SK-N-SH (cell line): ENCODE measurements at regions of chr2 and their contacts with region 1.

Region 1: GRCh38 chr2:74529357-74530238 is at the starts of genes AUP1 and HTRA2:
- DNase-seq: peak; percentile 98
- H3K4me3 ChIP-seq: peak within 1 kb of the TSS; percentile 83 to 99
- H3K27ac ChIP-seq: peak within 1 kb of the TSS; percentile 68 to 92
- H3K4me1 ChIP-seq: peaks cover 13 to 24% of the 10 kb centered on the region in 2 experiments
- H3K27me3 ChIP-seq: no peaks in the 10 kb centered on the region
- CTCF ChIP-seq: no peak
- EP300 ChIP-seq: no peak
- RAD21 ChIP-seq: 0 out of 2 replicates have a peak, but pooled peaks have one; percentile 4
- polyA plus RNA-seq, gene AUP1: 118 and 151 TPM in 2 replicates
- polyA plus RNA-seq, gene HTRA2: 55.7 and 60.4 TPM in 2 replicates

Region 2: GRCh38 chr2:73987109-73987947 is 542.3 kb before region 1 on chr2:
- CTCF ChIA-PET with region 1: no interaction called
- POLR2A ChIA-PET with region 1: no interaction called
- DNase-seq: peak; percentile 62
- H3K4me3 ChIP-seq: peak overlapping the region; percentile 41 to 42
- H3K27ac ChIP-seq: 0 out of 4 replicates have a peak overlapping the region, but pooled peaks of 1 of the 2 experiments have one; percentile 34
- H3K4me1 ChIP-seq: peaks cover 6 to 46% of the 10 kb centered on the region in 2 experiments; a peak in 3 of 4 replicates
- H3K27me3 ChIP-seq: no peaks in the 10 kb centered on the region
- CTCF ChIP-seq: peak; percentile 45
- EP300 ChIP-seq: no peak
- RAD21 ChIP-seq: peak; percentile 59

Region 3: DNA sequence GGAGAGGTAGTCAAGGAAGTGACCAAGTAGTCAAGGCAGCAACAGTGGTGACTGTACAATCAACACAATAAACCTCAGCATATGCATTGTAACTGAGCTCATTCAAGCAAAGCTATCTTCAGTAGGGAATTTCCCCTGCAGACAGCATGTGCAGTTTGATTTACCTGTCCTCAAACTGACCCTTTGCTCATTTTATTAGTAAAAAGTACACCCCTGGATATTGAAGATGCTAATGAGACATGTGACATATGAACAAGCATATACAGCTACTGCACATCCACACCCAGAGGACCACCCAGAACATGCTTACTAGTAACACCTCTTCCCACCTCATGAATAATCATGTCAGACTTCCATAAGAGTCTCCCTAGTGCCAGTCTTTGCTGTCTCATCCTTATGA is 123.6 kb before region 1 on chr2:
- CTCF ChIA-PET with region 1: no interaction called
- POLR2A ChIA-PET with region 1: no interaction called
- DNase-seq: no peak
- H3K4me3 ChIP-seq: no peak overlapping the region
- H3K27ac ChIP-seq: peak overlapping the region in 1 of 2 experiments; percentile 12; a peak in 1 of 4 replicates
- H3K4me1 ChIP-seq: peaks cover 2 to 9% of the 10 kb centered on the region in 2 experiments; a peak in 2 of 4 replicates
- H3K27me3 ChIP-seq: no peaks in the 10 kb centered on the region
- CTCF ChIP-seq: no peak
- EP300 ChIP-seq: no peak
- RAD21 ChIP-seq: no peak

Region 4: DNA sequence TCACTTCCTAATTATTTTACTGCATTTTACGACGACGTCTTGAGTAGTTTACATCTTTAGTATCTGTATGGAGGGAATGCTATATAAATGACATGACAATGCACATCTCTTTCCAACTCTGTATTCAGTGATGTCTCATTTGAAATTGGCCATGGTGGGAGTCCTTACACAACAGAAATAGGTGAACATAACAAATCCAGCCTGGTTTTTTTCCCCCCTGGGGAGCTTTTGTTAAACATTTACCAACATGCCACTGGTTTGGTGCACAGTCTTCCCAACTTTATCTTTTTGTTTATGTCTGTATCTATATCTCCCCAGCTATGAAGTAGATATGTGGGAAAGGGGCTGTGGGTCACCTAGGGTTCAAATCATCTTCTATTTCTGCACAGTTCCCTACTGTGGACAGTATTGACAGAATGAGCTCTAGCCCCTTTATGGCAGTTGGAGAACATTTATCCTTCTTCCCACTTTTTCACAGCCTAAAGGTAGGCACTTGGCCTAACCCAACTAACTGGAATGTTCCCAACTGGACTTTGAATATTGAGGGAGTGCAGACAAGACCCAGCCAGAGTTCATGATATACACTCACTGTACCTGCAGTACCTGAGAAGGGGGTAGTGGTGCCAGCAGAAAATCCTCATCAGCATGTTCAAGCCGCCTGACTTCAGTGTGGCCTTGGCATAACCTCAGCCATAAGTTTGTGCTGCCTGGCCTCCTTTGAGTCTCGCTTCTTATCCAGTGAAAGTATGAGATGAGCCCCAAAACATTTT is 82.2 kb before region 1 on chr2:
- CTCF ChIA-PET with region 1: no interaction called
- POLR2A ChIA-PET with region 1: no interaction called
- DNase-seq: no peak
- H3K4me3 ChIP-seq: no peak overlapping the region
- H3K27ac ChIP-seq: no peak overlapping the region
- H3K4me1 ChIP-seq: peaks cover 0 to 3% of the 10 kb centered on the region in 2 experiments; a peak in 1 of 4 replicates
- H3K27me3 ChIP-seq: no peaks in the 10 kb centered on the region
- CTCF ChIP-seq: no peak
- EP300 ChIP-seq: no peak
- RAD21 ChIP-seq: no peak

Region 5: DNA sequence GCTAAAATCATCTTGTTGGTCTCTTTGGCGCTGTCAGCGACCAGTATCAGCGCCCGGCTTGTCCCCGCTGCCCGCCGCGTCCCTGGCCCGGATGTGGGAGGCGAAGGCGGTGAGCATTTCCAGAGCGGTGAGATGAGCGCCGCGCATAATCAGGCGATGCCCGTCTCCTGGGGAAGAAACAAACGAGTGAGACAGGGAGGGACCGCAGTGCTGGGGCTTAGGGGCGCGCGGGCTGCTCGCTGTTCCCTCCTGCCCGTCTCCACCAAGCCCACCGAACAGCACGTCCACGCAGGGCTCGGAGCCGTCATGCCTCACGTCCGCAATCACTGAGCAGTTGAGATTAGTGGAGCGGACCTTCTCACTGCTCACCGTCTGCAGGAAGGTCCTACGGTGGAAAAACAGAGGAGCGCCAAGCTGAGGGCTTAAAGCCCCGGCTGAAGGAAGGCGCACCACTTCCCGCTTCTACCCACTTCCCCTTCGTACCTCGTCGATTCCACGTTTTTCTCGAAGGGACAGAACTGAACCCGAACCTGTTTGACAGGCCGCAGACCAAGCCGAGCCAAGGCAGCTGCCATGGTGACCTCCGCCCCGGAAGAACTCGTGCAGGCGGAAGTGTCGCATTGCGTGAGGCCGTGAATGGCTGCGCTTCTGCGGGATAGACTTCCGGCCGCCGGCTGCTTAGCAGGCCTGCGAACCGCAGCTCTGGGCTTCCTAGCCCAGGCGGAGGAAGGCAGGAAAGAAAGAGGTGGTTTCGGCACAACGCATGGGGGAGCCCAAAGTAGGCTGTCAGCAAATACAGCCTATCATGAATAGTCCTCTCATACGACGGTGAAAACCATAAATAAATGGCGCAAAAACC is 57.3 kb before region 1 on chr2 and contains the start of gene MRPL53:
- CTCF ChIA-PET with region 1: interaction called, 28 read pairs
- POLR2A ChIA-PET with region 1: interaction called, 10 read pairs
- DNase-seq: peak; percentile 85
- H3K4me3 ChIP-seq: peak within 1 kb of the TSS; percentile 68 to 74
- H3K27ac ChIP-seq: peak within 1 kb of the TSS; percentile 78 to 94
- H3K4me1 ChIP-seq: peaks cover 6 to 7% of the 10 kb centered on the region in 2 experiments; a peak in 2 of 4 replicates
- H3K27me3 ChIP-seq: no peaks in the 10 kb centered on the region
- CTCF ChIP-seq: no peak
- EP300 ChIP-seq: no peak
- RAD21 ChIP-seq: no peak
- polyA plus RNA-seq, gene MRPL53: 60.6 and 95.0 TPM in 2 replicates

Region 6: GRCh38 chr2:74488644-74489481 is 40.7 kb before region 1 on chr2:
- CTCF ChIA-PET with region 1: interaction called, 102 read pairs
- POLR2A ChIA-PET with region 1: no interaction called
- DNase-seq: no peak
- H3K4me3 ChIP-seq: no peak overlapping the region
- H3K27ac ChIP-seq: no peak overlapping the region
- H3K4me1 ChIP-seq: peaks cover 0 to 2% of the 10 kb centered on the region in 2 experiments; a peak in 2 of 4 replicates
- H3K27me3 ChIP-seq: no peaks in the 10 kb centered on the region
- CTCF ChIP-seq: no peak
- EP300 ChIP-seq: no peak
- RAD21 ChIP-seq: no peak

Region 7: DNA sequence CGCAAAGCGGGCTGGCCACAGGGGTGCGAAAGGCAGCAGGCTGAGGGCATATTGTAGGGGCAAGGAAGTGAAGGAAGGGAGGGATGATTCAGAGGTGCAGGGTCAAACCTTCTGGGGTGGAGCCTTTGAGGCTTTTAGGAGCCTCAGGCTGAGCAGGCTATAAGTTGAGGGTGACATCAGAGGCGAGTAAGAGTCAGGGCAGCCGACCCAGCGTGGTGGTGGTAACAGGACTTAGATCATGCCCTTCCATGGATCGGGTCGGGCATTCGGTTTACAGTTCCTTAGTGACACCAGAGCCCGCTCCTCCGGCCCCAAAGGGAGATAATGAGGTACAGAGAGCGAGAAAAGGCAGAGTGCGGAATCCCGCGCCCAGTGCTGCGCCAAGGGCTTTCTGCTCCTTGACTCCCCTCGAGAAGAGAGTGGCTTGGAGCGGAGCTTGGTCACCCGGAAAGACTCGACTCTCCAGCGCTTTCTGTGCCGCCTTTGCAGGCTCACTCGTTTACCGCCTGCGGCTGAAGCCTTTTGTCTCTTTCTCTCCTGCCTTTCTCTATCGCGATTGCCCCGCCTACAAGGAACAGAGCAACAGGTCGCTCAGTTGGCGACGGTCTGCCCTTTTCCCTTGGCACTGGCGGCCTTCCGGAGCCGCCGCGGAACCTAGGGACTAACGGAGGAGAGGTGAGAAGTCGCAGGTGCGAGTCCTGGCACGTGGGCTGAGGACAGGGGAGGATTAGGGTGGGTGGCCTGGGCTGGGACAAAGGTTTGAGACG is 30.9 kb before region 1 on chr2:
- CTCF ChIA-PET with region 1: interaction called, 20 read pairs
- POLR2A ChIA-PET with region 1: interaction called, 10 read pairs
- DNase-seq: peak; percentile 49
- H3K4me3 ChIP-seq: peak overlapping the region in 1 of 2 experiments; percentile 24; a peak in 2 of 4 replicates
- H3K27ac ChIP-seq: no peak overlapping the region
- H3K4me1 ChIP-seq: peaks cover 0 to 22% of the 10 kb centered on the region in 2 experiments; a peak in 1 of 4 replicates
- H3K27me3 ChIP-seq: no peaks in the 10 kb centered on the region
- CTCF ChIP-seq: no peak
- EP300 ChIP-seq: no peak
- RAD21 ChIP-seq: no peak

Region 8: DNA sequence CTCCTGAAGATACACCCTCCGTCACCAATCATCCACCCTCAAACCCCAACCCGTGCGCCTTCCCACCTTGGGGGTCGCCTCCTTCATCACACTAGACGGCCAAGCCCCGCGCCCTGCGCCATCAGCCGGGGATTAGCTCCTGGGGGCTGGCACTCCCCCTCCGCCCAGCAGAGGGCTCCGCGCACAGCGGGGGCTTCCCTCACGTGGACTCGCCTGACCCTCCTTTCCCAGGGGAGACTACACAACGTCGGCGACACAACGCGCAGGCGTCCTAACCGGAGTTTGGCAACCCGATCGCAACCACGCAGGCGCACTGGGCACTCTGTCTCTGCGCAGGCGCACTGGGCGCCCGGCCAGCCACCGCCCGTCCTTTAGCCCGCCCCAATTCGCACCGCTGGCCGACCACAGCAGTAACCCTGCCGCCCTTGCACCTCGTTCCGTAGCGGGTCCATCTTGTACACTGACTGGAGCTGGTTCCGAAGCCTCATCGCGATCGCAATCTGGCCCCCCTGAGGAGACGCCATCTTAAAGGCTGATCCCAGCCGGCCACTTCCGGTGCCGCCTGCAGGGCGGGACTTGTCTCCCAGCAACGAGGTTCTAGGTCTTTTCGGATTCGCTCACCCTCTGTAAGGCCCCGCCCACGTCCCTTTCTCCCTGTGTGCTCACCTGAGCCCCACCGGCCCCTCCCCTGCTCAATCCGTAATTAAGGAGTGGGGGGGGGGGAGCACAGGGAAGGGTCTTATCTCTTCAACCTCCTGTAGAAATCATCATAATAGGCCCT is 22.3 kb before region 1 on chr2 and contains the start of gene PCGF1:
- CTCF ChIA-PET with region 1: interaction called, 80 read pairs
- POLR2A ChIA-PET with region 1: interaction called, 11 read pairs
- DNase-seq: peak; percentile 97
- H3K4me3 ChIP-seq: peak within 1 kb of the TSS; percentile 84 to 86
- H3K27ac ChIP-seq: peak within 1 kb of the TSS; percentile 99 to 100
- H3K4me1 ChIP-seq: peaks cover 19 to 26% of the 10 kb centered on the region in 2 experiments; a peak in 3 of 4 replicates
- H3K27me3 ChIP-seq: no peaks in the 10 kb centered on the region
- CTCF ChIP-seq: peak; percentile 53
- EP300 ChIP-seq: no peak
- RAD21 ChIP-seq: peak; percentile 57
- polyA plus RNA-seq, gene PCGF1: 44.9 and 46.4 TPM in 2 replicates

Region 9: DNA sequence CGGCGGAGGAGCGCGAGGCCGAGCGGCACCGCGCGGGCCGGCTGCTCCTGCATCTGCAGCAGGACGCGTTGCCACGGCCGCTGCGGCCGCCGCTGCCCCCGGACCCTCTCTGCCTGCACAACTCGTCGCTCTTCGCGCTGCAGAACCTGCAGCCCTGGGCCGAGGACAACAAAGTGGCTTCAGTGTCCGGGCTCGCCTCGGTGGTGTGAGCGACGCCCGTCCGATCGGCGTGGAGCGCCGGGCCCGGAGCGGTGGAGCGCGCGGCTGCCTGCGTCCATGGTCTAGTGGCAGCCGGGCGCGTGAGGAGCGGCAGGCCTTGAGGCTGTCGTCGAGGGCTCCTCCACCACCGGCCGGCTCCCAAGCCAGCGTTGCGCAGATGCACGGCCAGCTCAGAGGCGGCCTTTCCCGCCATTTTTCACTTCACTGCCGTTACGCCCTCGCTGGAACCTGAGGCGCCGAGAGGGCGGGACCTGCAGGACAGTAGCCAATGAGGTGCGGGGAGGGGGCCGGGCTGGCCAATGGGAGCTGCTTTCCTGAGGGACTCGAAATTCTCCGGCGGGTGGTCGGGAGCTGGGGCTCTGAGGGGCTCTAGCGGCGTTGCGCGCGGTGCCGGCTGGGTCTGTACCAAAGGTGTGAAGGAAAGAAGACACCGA is 13.5 kb before region 1 on chr2:
- CTCF ChIA-PET with region 1: interaction called, 80 read pairs
- POLR2A ChIA-PET with region 1: interaction called, 6 read pairs
- DNase-seq: peak; percentile 72
- H3K4me3 ChIP-seq: no peak overlapping the region; a peak in 1 of 4 replicates
- H3K27ac ChIP-seq: no peak overlapping the region
- H3K4me1 ChIP-seq: peaks cover 9 to 18% of the 10 kb centered on the region in 2 experiments; a peak in 1 of 4 replicates
- H3K27me3 ChIP-seq: no peaks in the 10 kb centered on the region
- CTCF ChIP-seq: no peak
- EP300 ChIP-seq: no peak
- RAD21 ChIP-seq: no peak

Region 10: GRCh38 chr2:74548900-74549826 is 19.6 kb after region 1 on chr2:
- CTCF ChIA-PET with region 1: interaction called, 26 read pairs
- POLR2A ChIA-PET with region 1: no interaction called
- DNase-seq: peak; percentile 92
- H3K4me3 ChIP-seq: peak overlapping the region; percentile 52 to 60
- H3K27ac ChIP-seq: peak overlapping the region in 1 of 2 experiments; percentile 77; a peak in 2 of 4 replicates
- H3K4me1 ChIP-seq: peaks cover 9 to 37% of the 10 kb centered on the region in 2 experiments; a peak in 3 of 4 replicates
- H3K27me3 ChIP-seq: no peaks in the 10 kb centered on the region
- CTCF ChIP-seq: no peak
- EP300 ChIP-seq: no peak
- RAD21 ChIP-seq: no peak

Region 11: GRCh38 chr2:74708883-74709282 is 179.3 kb after region 1 on chr2:
- CTCF ChIA-PET with region 1: no interaction called
- POLR2A ChIA-PET with region 1: no interaction called
- DNase-seq: no peak
- H3K4me3 ChIP-seq: no peak overlapping the region
- H3K27ac ChIP-seq: no peak overlapping the region
- H3K4me1 ChIP-seq: peaks cover 0 to 2% of the 10 kb centered on the region in 2 experiments; a peak in 1 of 4 replicates
- H3K27me3 ChIP-seq: no peaks in the 10 kb centered on the region
- CTCF ChIP-seq: no peak
- EP300 ChIP-seq: no peak
- RAD21 ChIP-seq: no peak